GM12878 (cell line): ENCODE measurements at regions of chr3 and their contacts with region 1.

Region 1: DNA sequence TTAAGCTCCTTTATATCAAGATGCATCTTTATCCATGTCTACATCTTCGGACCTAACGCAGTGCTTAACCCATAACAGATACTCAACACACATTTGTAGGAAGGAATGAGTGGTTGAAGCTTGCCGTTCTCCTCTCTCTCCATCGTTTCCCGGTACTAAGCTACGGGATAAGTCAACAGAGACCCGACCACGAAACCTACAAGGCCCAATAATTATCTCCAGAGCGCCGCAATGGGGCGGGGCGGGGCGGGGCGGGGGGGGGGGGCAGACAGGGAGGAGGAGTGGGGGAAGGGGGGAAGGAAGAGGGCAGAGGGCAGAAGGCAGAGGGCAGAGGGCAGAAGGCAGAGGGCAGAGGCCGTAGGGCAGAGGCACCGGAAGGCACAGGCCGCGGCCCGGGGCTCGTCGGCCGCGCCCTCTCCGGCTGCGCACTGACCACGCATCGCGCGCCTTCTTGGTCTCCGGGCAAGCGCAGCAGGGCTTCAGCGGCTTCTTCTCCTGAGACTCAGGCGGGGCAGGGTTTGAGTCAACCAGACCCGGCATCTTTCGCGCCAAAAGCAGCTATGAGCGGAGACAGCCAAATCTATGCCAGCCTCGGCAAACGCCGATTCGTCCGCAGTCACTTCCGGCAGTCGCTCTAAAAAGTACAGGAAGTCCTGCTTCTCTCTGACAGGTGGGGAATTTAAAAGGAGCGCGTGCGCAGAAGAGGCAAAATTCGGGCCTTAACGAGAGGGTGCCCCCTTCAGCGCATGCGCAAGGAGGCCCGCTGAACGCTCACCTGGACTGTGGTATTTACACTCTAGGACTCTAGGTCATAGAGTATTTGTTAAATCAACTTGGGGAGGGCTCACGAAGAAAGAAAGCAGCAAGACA is at the start of gene COX17:
- DNase-seq: peak; percentile 99
- ATAC-seq: peak; percentile 88
- H3K4me3 ChIP-seq: peak within 1 kb of the TSS; percentile 90
- H3K27ac ChIP-seq: peak within 1 kb of the TSS; percentile 95
- H3K4me1 ChIP-seq: peaks cover 6% of the 10 kb centered on the region
- H3K27me3 ChIP-seq: no peaks in the 10 kb centered on the region
- CTCF ChIP-seq: no peak
- EP300 ChIP-seq: 0 out of 4 replicates have a peak, but pooled peaks have one; percentile 3 to 28
- POLR2A ChIP-seq: peak; percentile 87
- RAD21 ChIP-seq: no peak
- polyA plus RNA-seq, gene COX17: 615 to 717 TPM

Region 2: DNA sequence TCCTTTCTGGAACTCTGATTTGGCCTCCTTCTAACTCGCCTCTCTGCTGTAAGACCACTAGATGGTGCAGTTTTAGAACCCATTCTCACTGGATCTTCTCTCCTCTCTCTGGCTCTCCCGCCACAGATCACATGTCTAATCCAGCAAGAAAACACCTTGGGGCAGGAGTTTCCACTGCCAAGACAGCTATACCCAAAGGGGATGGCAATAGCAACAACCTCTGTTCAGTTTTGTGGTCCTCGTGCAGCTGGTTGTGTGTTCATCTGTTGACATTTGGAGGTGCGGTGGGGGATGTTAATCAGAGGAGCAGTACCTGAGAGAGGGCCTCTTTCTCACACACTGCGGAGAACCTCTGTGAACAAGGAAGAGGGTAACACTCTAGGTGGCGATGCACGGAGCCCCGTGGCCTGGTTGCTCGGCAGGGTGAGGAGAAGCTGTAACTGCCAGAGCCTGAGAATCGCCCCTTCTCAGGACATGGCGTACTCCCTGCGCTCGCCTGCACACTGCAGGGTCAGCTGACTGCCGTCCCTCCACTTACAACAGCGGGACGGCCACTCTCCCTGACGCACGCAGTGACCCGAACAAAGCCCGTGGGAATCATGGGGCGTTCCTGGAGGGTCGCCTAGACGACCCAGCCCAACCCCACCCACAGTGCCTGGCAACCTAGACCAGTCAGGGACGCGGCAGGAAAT is 531.4 kb before region 1 on chr3 and contains the start of gene TEX55:
- CTCF ChIA-PET with region 1: interaction called, 8 read pairs
- POLR2A ChIA-PET with region 1: no interaction called
- RAD21 ChIA-PET with region 1: interaction called, 4 read pairs
- SMC1A ChIA-PET with region 1: interaction called, 4 read pairs
- in situ Hi-C with region 1: loop called (anchors 10 kb)
- intact Hi-C with region 1: loop called (anchors 1 kb)
- DNase-seq: no peak
- ATAC-seq: peak; percentile 85
- H3K4me3 ChIP-seq: no peak within 1 kb of the TSS
- H3K27ac ChIP-seq: no peak within 1 kb of the TSS
- H3K4me1 ChIP-seq: no peaks in the 10 kb centered on the region
- H3K27me3 ChIP-seq: no peaks in the 10 kb centered on the region
- CTCF ChIP-seq: peak; percentile 48 to 57 (median 49); a peak in 5 of 6 replicates
- EP300 ChIP-seq: no peak
- POLR2A ChIP-seq: no peak
- RAD21 ChIP-seq: peak; percentile 47
- polyA plus RNA-seq, gene TEX55: not detected

Region 3: GRCh38 chr3:119293871-119294695 is 382.9 kb before region 1 on chr3 and contains the start of gene ARHGAP31:
- CTCF ChIA-PET with region 1: interaction called, 4 read pairs
- POLR2A ChIA-PET with region 1: no interaction called
- RAD21 ChIA-PET with region 1: interaction called, 3 read pairs
- SMC1A ChIA-PET with region 1: interaction called, 4 read pairs
- in situ Hi-C with region 1: loop called (anchors 25 kb)
- intact Hi-C with region 1: no loop called
- DNase-seq: peak; percentile 62
- ATAC-seq: peak; percentile 82
- H3K4me3 ChIP-seq: peak within 1 kb of the TSS; percentile 94
- H3K27ac ChIP-seq: peak within 1 kb of the TSS; percentile 96
- H3K4me1 ChIP-seq: peaks cover 27% of the 10 kb centered on the region
- H3K27me3 ChIP-seq: no peaks in the 10 kb centered on the region
- CTCF ChIP-seq: no peak
- EP300 ChIP-seq: peak in 1 of 2 experiments; percentile 14; a peak in 1 of 4 replicates
- POLR2A ChIP-seq: peak; percentile 81
- RAD21 ChIP-seq: no peak
- polyA plus RNA-seq, gene ARHGAP31: 0.97 to 1.6 TPM

Region 4: DNA sequence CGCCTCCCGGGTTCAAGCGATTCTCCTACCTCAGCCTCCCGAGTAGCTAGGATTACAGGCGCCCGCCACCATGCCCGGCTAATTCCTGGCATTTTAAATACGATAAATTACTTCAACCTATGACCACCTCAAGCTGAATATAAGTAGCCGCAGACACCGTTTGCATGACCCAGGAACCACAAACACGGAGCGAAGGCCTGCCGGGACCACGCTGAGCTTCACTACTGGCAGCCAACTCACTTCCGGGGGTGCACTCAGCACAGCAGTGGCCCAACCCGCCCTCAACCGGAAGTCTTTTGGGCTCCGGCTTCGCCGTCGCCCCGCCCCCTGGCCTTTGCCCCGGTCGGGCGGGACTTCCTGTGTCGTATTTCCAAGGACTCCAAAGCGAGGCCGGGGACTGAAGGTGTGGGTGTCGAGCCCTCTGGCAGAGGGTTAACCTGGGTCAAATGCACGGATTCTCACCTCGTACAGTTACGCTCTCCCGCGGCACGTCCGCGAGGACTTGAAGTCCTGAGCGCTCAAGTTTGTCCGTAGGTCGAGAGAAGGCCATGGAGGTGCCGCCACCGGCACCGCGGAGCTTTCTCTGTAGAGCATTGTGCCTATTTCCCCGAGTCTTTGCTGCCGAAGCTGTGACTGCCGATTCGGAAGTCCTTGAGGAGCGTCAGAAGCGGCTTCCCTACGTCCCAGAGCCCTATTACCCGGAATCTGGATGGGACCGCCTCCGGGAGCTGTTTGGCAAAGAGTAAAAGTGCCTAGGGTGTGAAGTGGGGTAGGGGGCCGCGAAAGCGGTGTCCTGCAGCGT is 178.6 kb before region 1 on chr3 and contains the start of gene TIMMDC1:
- CTCF ChIA-PET with region 1: interaction called, 27 read pairs
- POLR2A ChIA-PET with region 1: interaction called, 6 read pairs
- RAD21 ChIA-PET with region 1: interaction called, 24 read pairs
- SMC1A ChIA-PET with region 1: interaction called, 10 read pairs
- in situ Hi-C with region 1: no loop called
- intact Hi-C with region 1: no loop called
- DNase-seq: peak; percentile 83
- ATAC-seq: peak; percentile 96
- H3K4me3 ChIP-seq: peak within 1 kb of the TSS; percentile 75
- H3K27ac ChIP-seq: peak within 1 kb of the TSS; percentile 94
- H3K4me1 ChIP-seq: no peaks in the 10 kb centered on the region
- H3K27me3 ChIP-seq: no peaks in the 10 kb centered on the region
- CTCF ChIP-seq: no peak
- EP300 ChIP-seq: peak in 1 of 2 experiments; percentile 27; a peak in 1 of 4 replicates
- POLR2A ChIP-seq: peak; percentile 96
- RAD21 ChIP-seq: no peak
- polyA plus RNA-seq, gene TIMMDC1: 136 to 146 TPM

Region 5: GRCh38 chr3:119579366-119580165 is 97.4 kb before region 1 on chr3 and contains the start of gene ADPRH:
- CTCF ChIA-PET with region 1: interaction called, 3 read pairs
- POLR2A ChIA-PET with region 1: interaction called, 14 read pairs
- RAD21 ChIA-PET with region 1: interaction called, 5 read pairs
- SMC1A ChIA-PET with region 1: interaction called, 8 read pairs
- in situ Hi-C with region 1: no loop called
- intact Hi-C with region 1: no loop called
- DNase-seq: no peak
- ATAC-seq: peak; percentile 80
- H3K4me3 ChIP-seq: peak within 1 kb of the TSS; percentile 84
- H3K27ac ChIP-seq: peak within 1 kb of the TSS; percentile 97
- H3K4me1 ChIP-seq: peaks cover 17% of the 10 kb centered on the region
- H3K27me3 ChIP-seq: no peaks in the 10 kb centered on the region
- CTCF ChIP-seq: no peak
- EP300 ChIP-seq: no peak
- POLR2A ChIP-seq: peak; percentile 80
- RAD21 ChIP-seq: no peak
- polyA plus RNA-seq, gene ADPRH: 2.3 to 3.7 TPM

Region 6: DNA sequence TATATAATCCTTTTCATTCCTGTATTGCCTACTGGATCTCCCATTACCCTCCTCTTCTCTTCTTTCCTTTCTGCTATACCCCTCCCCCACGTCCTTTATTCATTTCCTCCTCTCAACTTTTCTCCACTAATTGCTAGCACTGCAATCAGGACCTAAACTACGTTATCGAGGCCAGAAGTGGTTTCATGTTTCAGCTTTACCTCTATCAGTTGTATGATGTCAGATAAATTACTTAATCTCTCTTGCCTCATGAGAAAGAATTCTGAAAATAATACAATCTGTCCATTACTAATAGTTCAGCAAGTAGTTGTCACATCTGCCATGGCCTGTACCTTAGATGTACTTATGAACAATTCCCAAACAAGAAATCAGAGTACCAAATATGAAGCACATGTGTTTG is 27.2 kb before region 1 on chr3:
- CTCF ChIA-PET with region 1: interaction called, 5 read pairs
- POLR2A ChIA-PET with region 1: interaction called, 3 read pairs
- RAD21 ChIA-PET with region 1: interaction called, 3 read pairs
- SMC1A ChIA-PET with region 1: interaction called, 10 read pairs
- in situ Hi-C with region 1: no loop called
- intact Hi-C with region 1: no loop called
- DNase-seq: no peak
- ATAC-seq: no peak
- H3K4me3 ChIP-seq: no peak overlapping the region
- H3K27ac ChIP-seq: no peak overlapping the region
- H3K4me1 ChIP-seq: no peaks in the 10 kb centered on the region; the same call in 1 of the 2 replicates
- H3K27me3 ChIP-seq: no peaks in the 10 kb centered on the region
- CTCF ChIP-seq: no peak
- EP300 ChIP-seq: no peak
- POLR2A ChIP-seq: no peak
- RAD21 ChIP-seq: no peak